PC-9 (cell line): ENCODE measurements at regions of chr7 and their contacts with region 1.

Region 1: GRCh38 chr7:134514663-134515062 is 12.7 kb upstream of the AKR1B10 start:
- DNase-seq: peak; percentile 35 to 78
- H3K4me3 ChIP-seq: no peak overlapping the region
- H3K27ac ChIP-seq: peak overlapping the region; percentile 94
- H3K4me1 ChIP-seq: peaks cover 69% of the 10 kb centered on the region
- H3K27me3 ChIP-seq: no peaks in the 10 kb centered on the region
- CTCF ChIP-seq: peak; percentile 97

Region 2: GRCh38 chr7:133853706-133854276 is 660.9 kb before region 1 on chr7:
- CTCF ChIA-PET with region 1: no interaction called
- POLR2A ChIA-PET with region 1: no interaction called
- intact Hi-C with region 1: loop called (anchors 5 kb)
- DNase-seq: peak; percentile 82 to 87
- H3K4me3 ChIP-seq: no peak overlapping the region
- H3K27ac ChIP-seq: peak overlapping the region; percentile 31
- H3K4me1 ChIP-seq: peaks cover 9% of the 10 kb centered on the region
- H3K27me3 ChIP-seq: no peaks in the 10 kb centered on the region
- CTCF ChIP-seq: peak; percentile 64; the same call in 1 of the 2 replicates

Region 3: GRCh38 chr7:134368851-134369552 is 145.7 kb before region 1 on chr7:
- CTCF ChIA-PET with region 1: no interaction called
- POLR2A ChIA-PET with region 1: no interaction called
- intact Hi-C with region 1: loop called (anchors 2 kb)
- DNase-seq: peak in 1 of 2 experiments; percentile 80
- H3K4me3 ChIP-seq: no peak overlapping the region
- H3K27ac ChIP-seq: peak overlapping the region; percentile 57
- H3K4me1 ChIP-seq: peaks cover 55% of the 10 kb centered on the region
- H3K27me3 ChIP-seq: no peaks in the 10 kb centered on the region
- CTCF ChIP-seq: no peak

Region 4: GRCh38 chr7:134458806-134459698 is 55.6 kb before region 1 on chr7 and contains the start of gene AKR1B1:
- CTCF ChIA-PET with region 1: interaction called, 3 read pairs
- POLR2A ChIA-PET with region 1: no interaction called
- intact Hi-C with region 1: loop called (anchors 1 kb)
- DNase-seq: peak; percentile 88 to 95
- H3K4me3 ChIP-seq: peak within 1 kb of the TSS; percentile 93
- H3K27ac ChIP-seq: peak within 1 kb of the TSS; percentile 97
- H3K4me1 ChIP-seq: peaks cover 74% of the 10 kb centered on the region
- H3K27me3 ChIP-seq: no peaks in the 10 kb centered on the region
- CTCF ChIP-seq: peak; percentile 36; the same call in 1 of the 2 replicates
- total RNA-seq, gene AKR1B1: 1,009 and 1,328 TPM in 2 replicates

Region 5: DNA sequence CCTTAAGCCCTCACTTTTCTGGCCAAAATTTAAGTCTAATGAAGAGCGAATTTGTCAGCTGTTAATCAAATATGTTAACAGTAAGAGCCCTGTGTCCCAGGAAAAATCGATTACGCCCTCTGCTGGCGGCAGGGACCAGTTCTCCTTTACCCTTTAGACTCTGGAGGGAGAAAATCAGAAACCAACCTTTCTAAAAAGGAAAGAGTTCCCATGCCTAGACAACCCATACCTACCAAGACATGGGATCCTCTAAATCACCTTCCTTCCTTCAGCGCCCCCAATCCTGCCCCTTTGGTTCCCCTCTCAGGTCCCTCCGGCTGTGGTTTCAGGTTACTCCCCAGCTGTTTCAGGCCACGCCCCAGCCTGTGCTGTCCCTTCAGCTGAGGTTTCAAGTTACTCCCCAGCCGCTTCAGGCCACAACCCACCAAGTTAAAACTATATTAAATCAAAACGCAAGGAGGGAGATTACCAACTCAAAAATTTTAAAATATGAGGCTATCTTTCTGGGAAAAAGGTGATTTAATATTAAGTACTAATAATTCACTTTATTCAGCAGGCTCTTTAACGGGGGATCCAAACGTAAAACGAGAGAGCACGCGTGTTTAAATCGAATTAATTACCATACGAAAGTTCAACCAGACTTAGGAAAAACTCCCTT is 32.9 kb after region 1 on chr7:
- CTCF ChIA-PET with region 1: interaction called, 3 read pairs
- POLR2A ChIA-PET with region 1: no interaction called
- intact Hi-C with region 1: loop called (anchors 1 kb)
- DNase-seq: peak; percentile 75 to 77
- H3K4me3 ChIP-seq: peak overlapping the region; percentile 20; the same call in 1 of the 2 replicates
- H3K27ac ChIP-seq: peak overlapping the region; percentile 84
- H3K4me1 ChIP-seq: peaks cover 42% of the 10 kb centered on the region
- H3K27me3 ChIP-seq: no peaks in the 10 kb centered on the region
- CTCF ChIP-seq: peak; percentile 97

Region 6: DNA sequence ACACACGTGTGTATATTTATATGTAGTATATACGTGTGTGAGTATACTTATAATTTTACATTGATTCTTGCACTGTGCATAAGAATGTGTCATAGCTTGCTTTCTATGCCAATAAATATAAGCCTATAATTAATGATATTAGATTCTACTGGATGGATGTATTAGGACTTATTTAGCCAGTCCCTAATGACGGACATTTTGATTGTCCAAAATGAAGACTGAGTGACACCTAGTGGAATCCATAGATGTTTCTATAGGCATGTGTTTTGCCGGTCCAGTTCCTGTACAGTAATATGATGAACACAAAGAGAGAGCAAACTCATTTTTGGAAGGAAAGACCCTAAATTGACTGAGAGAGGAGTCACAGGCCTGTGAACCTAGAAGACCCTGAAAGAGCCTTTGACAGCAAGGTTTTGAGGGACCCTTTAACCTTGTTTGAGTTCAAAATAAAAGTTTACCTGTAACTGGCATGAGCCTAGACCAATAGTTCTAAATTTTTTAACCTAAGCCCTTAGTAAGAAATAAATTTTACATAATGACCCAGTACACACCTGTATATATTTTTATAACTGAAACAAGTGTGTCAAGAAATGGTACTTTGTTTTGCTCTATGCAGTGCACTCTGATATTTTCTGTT is 429.2 kb after region 1 on chr7:
- CTCF ChIA-PET with region 1: no interaction called
- POLR2A ChIA-PET with region 1: no interaction called
- intact Hi-C with region 1: loop called (anchors 5 kb)
- DNase-seq: no peak
- H3K4me3 ChIP-seq: no peak overlapping the region
- H3K27ac ChIP-seq: no peak overlapping the region
- H3K4me1 ChIP-seq: peaks cover 23% of the 10 kb centered on the region
- H3K27me3 ChIP-seq: no peaks in the 10 kb centered on the region
- CTCF ChIP-seq: peak; percentile 72